Stomach (tissue), 19 donors: ENCODE measurements at regions of chr19 and their contacts with region 1.

Region 1: DNA sequence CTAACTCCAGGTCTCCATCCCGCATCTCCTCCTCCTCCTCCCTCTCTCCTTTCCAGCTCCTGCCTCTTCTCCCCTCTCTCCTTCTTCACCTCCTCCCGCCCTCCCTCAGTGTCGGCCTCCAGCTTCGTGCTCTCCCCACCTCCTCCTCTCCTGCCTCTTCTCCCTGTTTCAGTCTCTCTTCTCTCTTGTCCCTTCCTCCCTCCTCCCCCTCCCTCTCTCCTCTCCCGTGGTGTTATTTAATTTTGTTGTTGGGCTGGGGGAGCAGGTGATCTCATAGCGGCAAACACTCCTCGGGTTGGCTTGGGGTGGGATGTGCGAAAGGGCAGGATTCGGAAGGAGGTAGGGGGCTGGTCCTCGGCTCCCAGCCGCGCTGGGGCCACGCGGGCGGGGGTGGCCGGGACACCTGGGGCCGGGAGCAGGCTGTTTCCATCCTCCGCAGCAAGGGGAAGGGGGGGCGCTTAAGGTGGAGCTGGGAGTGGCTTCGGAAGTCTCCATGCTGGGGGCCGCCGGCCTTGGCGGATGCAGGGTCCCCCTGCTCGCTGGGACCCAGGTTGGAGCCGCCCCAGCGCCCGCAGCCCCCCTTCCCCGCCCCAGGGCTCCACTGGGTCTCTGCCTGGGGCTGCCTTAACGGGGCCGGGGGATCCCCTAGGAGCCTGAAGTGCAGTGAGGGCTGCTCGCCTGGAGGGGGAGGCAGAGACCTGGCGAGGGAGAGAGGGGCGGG is at the start of gene CA11:
- DNase-seq: peak; percentile 91 to 97
- H3K4me3 ChIP-seq: peak within 1 kb of the TSS; percentile 50 to 65 (median 57)
- H3K27ac ChIP-seq: peak within 1 kb of the TSS; percentile 79 to 95 (median 92)
- H3K4me1 ChIP-seq: peaks cover 14 to 33% (median 28%) of the 10 kb centered on the region in 4 donors
- H3K27me3 ChIP-seq: no peaks in the 10 kb centered on the region
- CTCF ChIP-seq: peak in 5 of 7 experiments; percentile 94 to 98 (median 96)
- EP300 ChIP-seq: no peak
- POLR2A ChIP-seq: no peak
- total RNA-seq, gene CA11: 1.8 to 33.0 (median 18.1) TPM in 4 of 5 donors, not detected in the other

Region 2: DNA sequence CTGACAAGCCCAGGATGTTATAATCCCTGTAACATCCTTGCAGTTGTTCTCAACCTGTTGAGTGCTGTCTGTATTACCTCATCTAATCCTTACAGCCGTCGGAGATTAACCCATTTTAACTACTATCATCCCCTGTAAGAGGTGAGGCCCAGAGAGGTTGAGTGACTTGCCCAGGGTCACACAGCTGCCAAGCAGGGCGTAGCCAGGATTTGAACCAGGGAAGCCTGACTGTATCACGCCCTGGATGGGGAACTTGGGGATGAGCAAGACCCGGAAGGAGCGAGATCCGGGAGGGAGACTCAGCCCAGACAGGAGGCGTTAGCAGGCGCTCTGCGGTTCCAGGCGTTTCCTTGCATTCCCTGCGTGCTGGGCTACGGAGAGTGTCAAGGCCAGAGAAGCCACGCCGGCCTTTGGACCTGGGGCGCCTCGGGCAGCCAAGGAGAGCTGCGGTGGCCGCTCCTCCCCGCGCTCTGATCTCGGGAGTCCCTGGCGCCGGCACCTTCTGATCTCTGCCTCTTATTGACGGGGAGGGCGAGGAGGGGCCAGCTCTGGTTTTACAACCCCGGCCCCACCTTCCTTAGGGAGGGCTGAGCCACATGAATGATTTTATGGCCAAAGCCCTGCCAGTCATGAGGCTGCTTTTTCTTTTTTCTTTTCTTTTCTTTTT is 88.0 kb before region 1 on chr19:
- intact Hi-C with region 1: no loop called
- DNase-seq: peak; percentile 80 to 90
- H3K4me3 ChIP-seq: peak overlapping the region in 1 of 4 donors; percentile 6
- H3K27ac ChIP-seq: peak overlapping the region in 1 of 5 donors; percentile 19
- H3K4me1 ChIP-seq: peaks cover 5 to 30% (median 18%) of the 10 kb centered on the region in 4 donors
- H3K27me3 ChIP-seq: peaks cover 0 to 27% (median 0%) of the 10 kb centered on the region in 3 donors
- CTCF ChIP-seq: no peak
- EP300 ChIP-seq: no peak
- POLR2A ChIP-seq: no peak

Region 3: DNA sequence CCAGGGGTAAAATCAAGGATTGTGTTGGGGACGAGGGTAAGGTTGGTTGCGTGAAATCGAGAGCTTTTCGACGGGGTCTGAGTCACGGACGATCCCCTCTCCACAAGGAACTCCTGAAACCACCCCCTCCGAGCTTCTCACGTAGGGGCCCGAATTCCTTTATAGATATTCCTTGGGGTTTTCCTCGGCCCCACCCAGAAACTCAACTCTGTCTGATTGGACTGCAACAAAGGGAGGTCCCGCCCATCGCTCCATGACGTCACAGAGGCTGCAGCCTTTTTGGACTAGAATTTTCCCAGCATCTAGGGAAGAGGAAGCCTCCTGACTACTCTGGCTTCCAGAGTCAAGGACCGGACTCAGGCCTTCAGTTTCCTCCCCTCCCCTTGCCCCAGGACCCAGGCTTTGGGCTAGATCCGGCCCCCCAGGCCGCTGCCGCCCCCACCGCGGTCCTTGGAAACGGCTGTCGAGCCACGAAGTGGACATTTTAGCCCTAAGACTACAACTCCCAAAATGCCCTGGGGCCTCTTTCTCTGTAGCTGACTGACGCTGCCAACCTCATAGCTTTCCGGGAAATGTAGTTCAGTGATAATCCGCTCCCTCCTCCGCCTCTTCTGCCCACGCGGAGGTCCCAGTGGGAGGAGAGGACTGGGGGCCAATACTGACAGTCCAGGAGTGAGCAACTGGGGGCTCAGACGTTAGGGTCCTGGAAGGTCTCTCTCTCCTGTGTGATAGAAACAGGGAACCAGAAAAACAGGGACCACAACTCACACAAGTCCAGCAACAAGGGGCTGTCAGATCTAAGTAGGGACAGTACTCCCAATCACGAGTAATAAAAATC is 100.8 kb after region 1 on chr19 and contains the start of gene IZUMO1:
- intact Hi-C with region 1: loop called (anchors 10 kb)
- DNase-seq: peak; percentile 61 to 94
- H3K4me3 ChIP-seq: peak within 1 kb of the TSS; percentile 11 to 41 (median 26)
- H3K27ac ChIP-seq: peak within 1 kb of the TSS; percentile 55 to 86 (median 72)
- H3K4me1 ChIP-seq: peaks cover 9 to 40% (median 25%) of the 10 kb centered on the region in 4 donors
- H3K27me3 ChIP-seq: peaks cover 0 to 48% (median 0%) of the 10 kb centered on the region in 3 donors
- CTCF ChIP-seq: no peak
- EP300 ChIP-seq: no peak
- POLR2A ChIP-seq: no peak
- total RNA-seq, gene IZUMO1: 0.73 to 14.3 (median 10.7) TPM in 3 of 5 donors, not detected in the others